ENCODE measurements at regions of chr1 and their contacts with region 1.

Region 1: GRCh38 chr1:222772996-222773379 is 36.0 kb downstream of the FAM177B start:
- DNase-seq: peak; percentile 33
- ATAC-seq: peak; percentile 66
- H3K4me3 Mint-ChIP-seq: peak overlapping the region; percentile 57
- H3K27ac Mint-ChIP-seq: peak overlapping the region; percentile 89
- H3K4me1 Mint-ChIP-seq: peaks cover 49% of the 10 kb centered on the region
- H3K27me3 Mint-ChIP-seq: no peaks in the 10 kb centered on the region
- CTCF ChIP-seq: no peak

Region 2: GRCh38 chr1:222754366-222755139 is 18.4 kb before region 1 on chr1:
- CTCF ChIA-PET with region 1: interaction called, 4 read pairs
- POLR2A ChIA-PET with region 1: interaction called, 9 read pairs
- intact Hi-C with region 1: loop called (anchors 1 kb)
- DNase-seq: no peak
- ATAC-seq: no peak
- H3K4me3 Mint-ChIP-seq: no peak overlapping the region
- H3K27ac Mint-ChIP-seq: peak overlapping the region; percentile 61
- H3K4me1 Mint-ChIP-seq: peaks cover 65% of the 10 kb centered on the region
- H3K27me3 Mint-ChIP-seq: no peaks in the 10 kb centered on the region
- CTCF ChIP-seq: no peak

Region 3: DNA sequence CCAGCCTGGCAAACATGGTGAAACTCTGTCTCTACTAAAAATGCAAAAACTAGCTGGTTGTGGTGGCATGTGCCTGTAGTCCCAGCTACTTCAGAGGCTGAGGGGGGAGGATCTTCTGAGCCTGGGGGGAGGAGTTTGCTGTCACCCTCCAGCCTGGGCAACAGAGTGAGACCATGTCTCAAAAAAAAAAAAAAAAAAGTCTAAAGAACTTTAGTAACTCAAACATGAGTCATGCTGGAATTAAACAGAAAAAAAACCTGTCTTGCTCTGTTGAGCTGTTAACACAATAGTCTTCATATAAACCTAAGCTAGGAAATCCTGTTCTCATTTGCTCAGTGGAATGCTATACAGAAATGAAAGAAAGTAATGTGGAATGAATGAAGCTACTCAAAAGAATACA is 25.1 kb after region 1 on chr1:
- CTCF ChIA-PET with region 1: no interaction called
- POLR2A ChIA-PET with region 1: interaction called, 7 read pairs
- intact Hi-C with region 1: loop called (anchors 2 kb)
- DNase-seq: no peak
- ATAC-seq: peak; percentile 99
- H3K4me3 Mint-ChIP-seq: no peak overlapping the region
- H3K27ac Mint-ChIP-seq: peak overlapping the region; percentile 75
- H3K4me1 Mint-ChIP-seq: peaks cover 22% of the 10 kb centered on the region
- H3K27me3 Mint-ChIP-seq: no peaks in the 10 kb centered on the region
- CTCF ChIP-seq: no peak

Region 4: GRCh38 chr1:222814536-222815439 is 41.8 kb after region 1 on chr1 and contains the start of gene DISP1:
- CTCF ChIA-PET with region 1: no interaction called
- POLR2A ChIA-PET with region 1: no interaction called
- intact Hi-C with region 1: loop called (anchors 1 kb)
- DNase-seq: peak; percentile 66
- ATAC-seq: peak; percentile 83
- H3K4me3 Mint-ChIP-seq: peak within 1 kb of the TSS; percentile 95
- H3K27ac Mint-ChIP-seq: peak within 1 kb of the TSS; percentile 95
- H3K4me1 Mint-ChIP-seq: peaks cover 43% of the 10 kb centered on the region
- H3K27me3 Mint-ChIP-seq: peaks cover 4% of the 10 kb centered on the region
- CTCF ChIP-seq: no peak
- total RNA-seq, gene DISP1: 4.5 and 5.1 TPM in 2 replicates

Region 5: DNA sequence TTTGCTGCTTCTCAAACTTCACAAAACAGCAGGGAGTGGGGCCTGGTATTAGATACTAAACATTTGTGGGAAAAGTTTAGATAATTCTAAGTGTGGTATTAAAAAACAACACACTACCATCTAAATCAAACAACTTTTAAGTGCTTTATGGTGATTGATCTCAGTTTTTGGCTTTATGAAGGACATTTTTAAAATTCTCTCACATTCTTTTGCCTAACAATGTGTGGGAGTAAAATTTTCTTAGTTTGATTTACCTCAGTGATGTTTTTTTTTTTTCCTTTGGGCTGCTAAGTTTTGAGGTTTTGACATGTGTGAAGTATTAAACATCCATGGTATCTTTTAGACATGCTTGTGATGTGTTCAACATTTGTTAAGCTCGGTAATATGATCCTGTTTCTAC is 158.0 kb after region 1 on chr1:
- CTCF ChIA-PET with region 1: no interaction called
- POLR2A ChIA-PET with region 1: no interaction called
- intact Hi-C with region 1: no loop called
- DNase-seq: no peak
- ATAC-seq: no peak
- H3K4me3 Mint-ChIP-seq: no peak overlapping the region
- H3K27ac Mint-ChIP-seq: no peak overlapping the region
- H3K4me1 Mint-ChIP-seq: no peaks in the 10 kb centered on the region
- H3K27me3 Mint-ChIP-seq: no peaks in the 10 kb centered on the region
- CTCF ChIP-seq: no peak

Region 6: DNA sequence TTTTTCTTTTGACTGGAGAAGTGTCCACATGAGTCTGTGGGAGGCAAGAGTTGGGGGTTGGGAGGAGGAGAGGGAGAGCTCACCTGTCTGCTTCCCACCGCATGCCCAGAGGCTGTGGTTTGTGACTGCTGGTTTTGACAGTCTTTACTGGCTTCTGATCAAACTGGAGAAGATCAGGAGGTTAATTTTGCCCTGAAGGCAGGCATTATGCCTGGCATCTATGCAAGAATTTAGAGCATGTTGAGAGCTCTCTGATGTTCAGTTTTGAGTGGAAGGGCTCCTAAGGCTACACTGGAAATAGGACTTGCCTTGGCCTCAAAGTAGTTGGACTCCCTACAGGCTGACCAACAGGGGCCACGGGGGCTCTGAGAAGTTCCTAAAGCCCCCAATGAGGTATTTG is 268.5 kb after region 1 on chr1:
- CTCF ChIA-PET with region 1: no interaction called
- POLR2A ChIA-PET with region 1: no interaction called
- intact Hi-C with region 1: no loop called
- DNase-seq: no peak
- ATAC-seq: no peak
- H3K4me3 Mint-ChIP-seq: no peak overlapping the region
- H3K27ac Mint-ChIP-seq: no peak overlapping the region
- H3K4me1 Mint-ChIP-seq: no peaks in the 10 kb centered on the region
- H3K27me3 Mint-ChIP-seq: peaks cover 18% of the 10 kb centered on the region
- CTCF ChIP-seq: no peak

Measured in activated B cell treated with CpG ODN at 0.5 μM for 24 hours (primary cell).